ENCODE measurements at regions of chr15 and their contacts with region 1.

Region 1: GRCh38 chr15:63191895-63192618 is 2.7 kb downstream of the RAB8B start:
- DNase-seq: peak; percentile 63 to 92 (median 91)
- H3K4me3 ChIP-seq: peak overlapping the region in 6 of 7 experiments; percentile 11 to 97 (median 54)
- H3K27ac ChIP-seq: peak overlapping the region; percentile 49 to 87
- H3K4me1 ChIP-seq: peaks cover 59 to 79% (median 71%) of the 10 kb centered on the region in 4 experiments
- H3K27me3 ChIP-seq: no peaks in the 10 kb centered on the region

Region 2: GRCh38 chr15:63203451-63204090 is 11.5 kb after region 1 on chr15:
- CTCF ChIA-PET with region 1: interaction called, 20 read pairs
- POLR2A ChIA-PET with region 1: interaction called, 6 read pairs
- DNase-seq: peak; percentile 88 to 98 (median 97)
- H3K4me3 ChIP-seq: no peak overlapping the region
- H3K27ac ChIP-seq: no peak overlapping the region
- H3K4me1 ChIP-seq: peaks cover 5 to 42% (median 19%) of the 10 kb centered on the region in 4 experiments
- H3K27me3 ChIP-seq: no peaks in the 10 kb centered on the region

Region 3: GRCh38 chr15:63226966-63227401 is 34.9 kb after region 1 on chr15:
- CTCF ChIA-PET with region 1: interaction called, 11 read pairs
- POLR2A ChIA-PET with region 1: interaction called, 4 read pairs
- DNase-seq: peak in 1 of 3 donors; percentile 41
- H3K4me3 ChIP-seq: peak overlapping the region in 3 of 7 experiments; percentile 37 to 75 (median 71)
- H3K27ac ChIP-seq: peak overlapping the region; percentile 25 to 82
- H3K4me1 ChIP-seq: peaks cover 20 to 49% (median 29%) of the 10 kb centered on the region in 4 experiments
- H3K27me3 ChIP-seq: no peaks in the 10 kb centered on the region

Region 4: GRCh38 chr15:63234451-63234870 is 42.4 kb after region 1 on chr15:
- CTCF ChIA-PET with region 1: interaction called, 11 read pairs
- POLR2A ChIA-PET with region 1: interaction called, 4 read pairs
- DNase-seq: peak in 2 of 3 donors; percentile 35 to 52
- H3K4me3 ChIP-seq: peak overlapping the region in 3 of 7 experiments; percentile 10 to 46 (median 36)
- H3K27ac ChIP-seq: peak overlapping the region in 1 of 2 experiments; percentile 62
- H3K4me1 ChIP-seq: peaks cover 25 to 45% (median 33%) of the 10 kb centered on the region in 4 experiments
- H3K27me3 ChIP-seq: no peaks in the 10 kb centered on the region

Measured in common myeloid progenitor, CD34-positive (primary cell).